BJ (cell line): ENCODE measurements at regions of chr12 and their contacts with region 1.

Region 1: DNA sequence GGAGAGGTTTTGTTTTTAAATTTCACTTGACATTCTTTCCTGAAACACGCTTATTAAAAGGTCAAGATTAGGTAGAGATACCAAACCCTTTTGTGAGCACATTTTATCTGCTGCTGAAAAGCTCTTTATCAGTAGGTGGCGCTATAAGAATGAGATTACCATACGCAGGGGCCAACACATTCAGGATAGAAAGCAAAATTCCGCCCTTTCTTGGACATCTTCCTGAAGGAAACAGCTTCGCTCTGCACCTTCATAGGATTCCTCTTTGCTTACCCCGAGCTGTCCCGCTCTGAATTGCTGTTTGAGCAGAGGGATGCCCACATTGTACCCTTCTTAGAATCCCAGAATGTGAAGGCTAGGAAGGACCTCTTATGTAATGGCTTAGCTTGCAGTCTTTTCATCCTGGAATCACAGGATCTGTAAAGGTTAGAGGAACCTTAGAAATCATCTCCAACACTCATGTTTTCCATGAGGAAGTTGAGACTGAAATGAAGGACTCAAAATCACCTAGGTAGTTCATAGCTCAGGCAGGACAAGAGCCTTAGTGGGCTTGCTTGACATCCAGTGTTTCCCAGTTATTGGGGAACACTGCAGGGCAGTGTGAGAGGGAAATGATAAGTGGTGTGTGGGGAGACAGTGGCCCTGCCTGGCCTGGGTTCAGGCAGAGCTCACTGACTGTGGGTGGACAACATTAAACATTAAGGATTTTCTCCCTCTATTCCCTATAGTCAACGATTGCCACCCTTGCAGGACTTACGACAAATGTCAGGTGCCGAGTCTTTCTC is 38.7 kb upstream of the CRY1 start:
- DNase-seq: peak; percentile 3
- H3K4me3 ChIP-seq: no peak overlapping the region
- H3K27me3 ChIP-seq: no peaks in the 10 kb centered on the region
- CTCF ChIP-seq: peak; percentile 78

Region 2: DNA sequence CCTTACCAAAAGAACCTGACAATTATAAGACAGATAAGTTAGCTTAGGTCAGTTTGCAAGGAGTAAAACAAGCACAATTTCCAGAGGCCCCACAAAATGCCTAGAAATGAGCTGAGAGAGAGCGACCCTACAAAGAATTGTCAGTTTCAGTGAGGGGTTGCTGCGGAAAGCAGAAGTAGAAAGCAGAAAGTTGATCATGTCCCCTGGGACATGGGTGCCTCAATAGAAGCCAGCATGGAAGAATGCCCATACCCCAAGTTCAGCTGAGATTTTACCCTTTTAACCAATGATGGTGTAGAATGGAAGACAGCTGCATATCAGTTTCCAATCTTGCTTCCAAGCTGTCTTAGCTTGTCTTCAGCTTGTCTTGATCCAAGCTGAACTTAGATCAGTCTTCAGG is 16.9 kb before region 1 on chr12:
- CTCF ChIA-PET with region 1: interaction called, 12 read pairs
- POLR2A ChIA-PET with region 1: no interaction called
- DNase-seq: no peak
- H3K4me3 ChIP-seq: no peak overlapping the region
- H3K27me3 ChIP-seq: peaks cover 4% of the 10 kb centered on the region
- CTCF ChIP-seq: no peak

Region 3: GRCh38 chr12:107152315-107152714 is 20.3 kb after region 1 on chr12:
- CTCF ChIA-PET with region 1: interaction called, 10 read pairs
- POLR2A ChIA-PET with region 1: no interaction called
- DNase-seq: no peak
- H3K4me3 ChIP-seq: no peak overlapping the region
- H3K27me3 ChIP-seq: no peaks in the 10 kb centered on the region
- CTCF ChIP-seq: no peak

Region 4: GRCh38 chr12:107225635-107226034 is 93.6 kb after region 1 on chr12:
- CTCF ChIA-PET with region 1: no interaction called
- POLR2A ChIA-PET with region 1: no interaction called
- DNase-seq: no peak
- H3K4me3 ChIP-seq: no peak overlapping the region
- H3K27me3 ChIP-seq: no peaks in the 10 kb centered on the region
- CTCF ChIP-seq: no peak

Region 5: DNA sequence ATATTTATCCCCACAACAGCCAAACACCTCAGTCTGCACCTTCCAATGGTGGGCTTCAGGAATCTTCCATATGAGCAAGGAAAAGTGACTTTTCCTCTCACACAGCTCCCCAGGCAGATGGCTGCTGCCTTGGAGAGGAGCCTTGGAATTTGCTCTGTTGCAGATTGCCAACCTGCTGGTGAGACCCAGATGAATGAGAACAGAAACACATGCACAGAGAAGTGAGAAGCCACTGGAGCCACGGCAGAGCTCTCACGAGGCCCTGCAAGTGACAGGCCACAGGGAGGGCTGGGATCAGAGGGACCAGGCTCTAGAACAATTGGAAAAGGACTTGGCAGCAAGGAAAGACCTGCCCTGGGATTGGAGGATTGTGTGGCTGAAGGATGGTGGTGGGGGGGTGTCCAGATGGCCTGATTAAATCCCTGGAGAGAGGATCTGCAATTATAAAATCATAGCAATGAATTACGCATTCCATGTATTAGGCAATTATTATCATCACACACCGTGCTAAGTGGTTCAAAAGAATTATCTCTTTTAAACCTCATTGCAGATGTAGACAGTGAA is 468.6 kb after region 1 on chr12:
- CTCF ChIA-PET with region 1: interaction called, 341 read pairs
- POLR2A ChIA-PET with region 1: no interaction called
- DNase-seq: no peak
- H3K4me3 ChIP-seq: no peak overlapping the region
- H3K27me3 ChIP-seq: no peaks in the 10 kb centered on the region; the same call in 1 of the 2 replicates
- CTCF ChIP-seq: no peak

Region 6: GRCh38 chr12:107616941-107617340 is 484.9 kb after region 1 on chr12:
- CTCF ChIA-PET with region 1: interaction called, 341 read pairs
- POLR2A ChIA-PET with region 1: no interaction called
- DNase-seq: no peak
- H3K4me3 ChIP-seq: no peak overlapping the region
- H3K27me3 ChIP-seq: no peaks in the 10 kb centered on the region
- CTCF ChIP-seq: no peak